ENCODE measurements at regions of chr13 and their contacts with region 1.

Region 1: GRCh38 chr13:113208424-113209335 is at the start of gene PCID2:
- DNase-seq: peak; percentile 84 to 96 (median 90)
- ATAC-seq: peak; percentile 64
- H3K4me3 ChIP-seq: peak within 1 kb of the TSS; percentile 71
- H3K4me3 Mint-ChIP-seq: peak within 1 kb of the TSS; percentile 95
- H3K27ac ChIP-seq: peak within 1 kb of the TSS; percentile 90 to 93
- H3K27ac Mint-ChIP-seq: peak within 1 kb of the TSS; percentile 88
- H3K4me1 ChIP-seq: peaks cover 65% of the 10 kb centered on the region
- H3K4me1 Mint-ChIP-seq: peaks cover 64% of the 10 kb centered on the region
- H3K27me3 ChIP-seq: no peaks in the 10 kb centered on the region
- H3K27me3 Mint-ChIP-seq: no peaks in the 10 kb centered on the region
- CTCF ChIP-seq: no peak
- total RNA-seq, gene PCID2: 33.6 to 33.7 TPM

Region 2: GRCh38 chr13:112942689-112943308 is 265.9 kb before region 1 on chr13:
- CTCF ChIA-PET with region 1: no interaction called
- POLR2A ChIA-PET with region 1: interaction called, 8 read pairs
- intact Hi-C with region 1: loop called (anchors 2 kb)
- DNase-seq: peak; percentile 89 to 99 (median 95)
- ATAC-seq: peak; percentile 97
- H3K4me3 ChIP-seq: peak overlapping the region; percentile 45
- H3K4me3 Mint-ChIP-seq: peak overlapping the region; percentile 90
- H3K27ac ChIP-seq: no peak overlapping the region
- H3K27ac Mint-ChIP-seq: no peak overlapping the region
- H3K4me1 ChIP-seq: peaks cover 16% of the 10 kb centered on the region
- H3K4me1 Mint-ChIP-seq: peaks cover 6% of the 10 kb centered on the region
- H3K27me3 ChIP-seq: peaks cover 7 to 11% of the 10 kb centered on the region in 2 experiments
- H3K27me3 Mint-ChIP-seq: peaks cover 52% of the 10 kb centered on the region
- CTCF ChIP-seq: peak; percentile 97

Region 3: GRCh38 chr13:113153810-113154748 is 54.6 kb before region 1 on chr13:
- CTCF ChIA-PET with region 1: no interaction called
- POLR2A ChIA-PET with region 1: interaction called, 31 read pairs
- intact Hi-C with region 1: loop called (anchors 1 to 5 kb)
- DNase-seq: peak; percentile 59 to 88 (median 72)
- ATAC-seq: peak; percentile 83
- H3K4me3 ChIP-seq: peak overlapping the region; percentile 74
- H3K4me3 Mint-ChIP-seq: peak overlapping the region; percentile 90
- H3K27ac ChIP-seq: peak overlapping the region in 1 of 2 donors; percentile 73
- H3K27ac Mint-ChIP-seq: peak overlapping the region; percentile 84
- H3K4me1 ChIP-seq: peaks cover 33% of the 10 kb centered on the region
- H3K4me1 Mint-ChIP-seq: peaks cover 21% of the 10 kb centered on the region
- H3K27me3 ChIP-seq: no peaks in the 10 kb centered on the region
- H3K27me3 Mint-ChIP-seq: no peaks in the 10 kb centered on the region
- CTCF ChIP-seq: no peak

Region 4: GRCh38 chr13:113187263-113187669 is 21.4 kb before region 1 on chr13:
- CTCF ChIA-PET with region 1: interaction called, 3 read pairs
- POLR2A ChIA-PET with region 1: interaction called, 25 read pairs
- intact Hi-C with region 1: no loop called
- DNase-seq: peak in 6 of 14 experiments; percentile 24 to 72 (median 36)
- ATAC-seq: no peak
- H3K4me3 ChIP-seq: no peak overlapping the region
- H3K4me3 Mint-ChIP-seq: no peak overlapping the region
- H3K27ac ChIP-seq: no peak overlapping the region
- H3K27ac Mint-ChIP-seq: peak overlapping the region; percentile 85
- H3K4me1 ChIP-seq: peaks cover 32% of the 10 kb centered on the region
- H3K4me1 Mint-ChIP-seq: peaks cover 42% of the 10 kb centered on the region
- H3K27me3 ChIP-seq: no peaks in the 10 kb centered on the region
- H3K27me3 Mint-ChIP-seq: no peaks in the 10 kb centered on the region
- CTCF ChIP-seq: no peak

Region 5: GRCh38 chr13:113393563-113394338 is 185.1 kb after region 1 on chr13:
- CTCF ChIA-PET with region 1: no interaction called
- POLR2A ChIA-PET with region 1: interaction called, 5 read pairs
- intact Hi-C with region 1: loop called in 1 of 2 experiments (anchors 5 kb)
- DNase-seq: peak; percentile 63 to 92 (median 80)
- ATAC-seq: peak; percentile 96
- H3K4me3 ChIP-seq: peak overlapping the region; percentile 73
- H3K4me3 Mint-ChIP-seq: peak overlapping the region; percentile 89
- H3K27ac ChIP-seq: no peak overlapping the region
- H3K27ac Mint-ChIP-seq: no peak overlapping the region
- H3K4me1 ChIP-seq: peaks cover 11% of the 10 kb centered on the region
- H3K4me1 Mint-ChIP-seq: peaks cover 6% of the 10 kb centered on the region
- H3K27me3 ChIP-seq: no peaks in the 10 kb centered on the region
- H3K27me3 Mint-ChIP-seq: no peaks in the 10 kb centered on the region
- CTCF ChIP-seq: peak; percentile 73

Measured in CD4-positive, alpha-beta T cell (primary cell).